Activated CD4-positive, alpha-beta memory T cell treated with anti-CD3 and anti-CD28 coated beads, Interleukin-2, amount 10 ng/mL, durations not matched to agents 7 days and 5 days (primary cell): ENCODE measurements at regions of chr2 and their contacts with region 1.

Region 1: DNA sequence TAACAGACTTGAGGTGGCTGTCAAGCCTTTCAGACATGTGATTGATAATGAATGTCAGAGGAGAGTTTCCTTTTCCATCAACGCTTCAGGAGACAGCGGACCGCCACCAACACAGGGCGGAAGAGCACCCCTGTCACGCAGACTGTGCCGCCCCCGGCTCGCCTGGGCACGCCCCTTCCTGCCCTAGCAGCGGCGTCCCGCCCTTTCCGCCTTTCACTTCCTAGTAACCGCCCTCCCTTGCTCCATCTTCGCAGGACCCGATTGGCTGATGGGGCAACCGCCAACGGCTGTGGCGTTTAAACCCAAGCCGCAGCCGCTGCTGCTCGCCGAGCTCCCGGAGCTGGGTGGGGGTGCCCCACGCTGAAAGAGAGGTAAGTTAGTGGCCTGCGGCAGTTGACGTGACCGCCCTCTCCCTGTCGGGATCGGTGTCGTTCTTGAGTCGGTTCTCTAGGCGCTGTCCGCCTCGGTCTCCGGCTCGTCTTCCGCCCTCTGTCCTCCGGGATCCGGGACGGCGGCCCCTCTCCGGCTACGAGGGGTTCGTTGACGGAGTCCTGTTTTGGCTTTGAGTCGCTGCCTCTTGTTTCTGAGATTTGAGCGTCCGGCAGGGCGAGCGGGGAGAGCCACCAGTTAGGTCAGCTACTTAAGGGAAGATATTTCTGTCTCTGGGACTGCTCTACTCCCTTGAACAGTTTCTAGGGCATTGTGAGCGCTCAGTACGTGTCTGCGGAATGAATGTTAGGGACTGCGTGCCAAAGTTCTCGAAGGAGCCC is at the start of gene SGO2:
- DNase-seq: peak; percentile 98
- H3K4me3 Mint-ChIP-seq: peak within 1 kb of the TSS; percentile 91
- H3K27ac Mint-ChIP-seq: peak within 1 kb of the TSS; percentile 88
- H3K4me1 Mint-ChIP-seq: peaks cover 46% of the 10 kb centered on the region
- H3K27me3 Mint-ChIP-seq: peaks cover 3% of the 10 kb centered on the region
- total RNA-seq, gene SGO2: 44.2 to 45.3 TPM

Region 2: GRCh38 chr2:200509612-200510433 is 16.2 kb before region 1 on chr2 and contains the start of gene KCTD18:
- CTCF ChIA-PET with region 1: interaction called, 51 read pairs
- POLR2A ChIA-PET with region 1: interaction called, 47 read pairs
- DNase-seq: peak; percentile 92
- H3K4me3 Mint-ChIP-seq: peak within 1 kb of the TSS; percentile 91
- H3K27ac Mint-ChIP-seq: peak within 1 kb of the TSS; percentile 74
- H3K4me1 Mint-ChIP-seq: peaks cover 19% of the 10 kb centered on the region
- H3K27me3 Mint-ChIP-seq: peaks cover 4% of the 10 kb centered on the region
- total RNA-seq, gene KCTD18: 17.5 to 18.8 TPM